Right ventricle myocardium inferior (tissue), 1 donor: ENCODE measurements at regions of chr20 and their contacts with region 1.

Region 1: GRCh38 chr20:49166534-49167449 is 21.3 kb downstream of the STAU1 start:
- DNase-seq: no peak
- ATAC-seq: no peak

Region 2: DNA sequence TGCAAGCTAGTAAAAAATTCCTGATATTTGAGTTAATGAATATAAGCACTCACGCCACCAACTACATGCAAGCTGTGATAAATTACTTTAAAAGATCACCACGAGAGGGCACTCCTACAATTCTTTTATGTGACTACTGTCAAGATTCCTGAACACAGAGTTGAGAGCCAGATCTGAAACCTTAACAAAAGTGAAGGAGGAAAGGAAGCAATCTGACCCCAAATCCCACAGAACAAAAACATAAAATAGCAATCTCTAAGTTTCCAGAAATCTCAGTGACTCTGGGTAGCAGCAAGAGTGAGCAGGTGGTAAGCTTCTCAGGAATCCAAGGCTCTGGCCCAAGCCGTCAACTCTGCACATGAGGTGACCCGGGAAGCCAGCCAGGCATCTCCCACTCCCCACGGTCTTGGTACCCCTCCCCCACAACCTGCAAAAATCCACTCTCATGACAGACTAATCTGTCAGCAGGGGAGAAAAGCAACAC is 33.8 kb before region 1 on chr20:
- intact Hi-C with region 1: loop called (anchors 5 kb)
- DNase-seq: no peak
- ATAC-seq: peak; percentile 39

Region 3: GRCh38 chr20:49230561-49231193 is 63.9 kb after region 1 on chr20:
- intact Hi-C with region 1: no loop called
- DNase-seq: peak; percentile 68
- ATAC-seq: peak; percentile 61